Activated naive CD4-positive, alpha-beta T cell treated with anti-CD3 and anti-CD28 coated beads for 36 hours (primary cell): ENCODE measurements at regions of chr6 and their contacts with region 1.

Region 1: DNA sequence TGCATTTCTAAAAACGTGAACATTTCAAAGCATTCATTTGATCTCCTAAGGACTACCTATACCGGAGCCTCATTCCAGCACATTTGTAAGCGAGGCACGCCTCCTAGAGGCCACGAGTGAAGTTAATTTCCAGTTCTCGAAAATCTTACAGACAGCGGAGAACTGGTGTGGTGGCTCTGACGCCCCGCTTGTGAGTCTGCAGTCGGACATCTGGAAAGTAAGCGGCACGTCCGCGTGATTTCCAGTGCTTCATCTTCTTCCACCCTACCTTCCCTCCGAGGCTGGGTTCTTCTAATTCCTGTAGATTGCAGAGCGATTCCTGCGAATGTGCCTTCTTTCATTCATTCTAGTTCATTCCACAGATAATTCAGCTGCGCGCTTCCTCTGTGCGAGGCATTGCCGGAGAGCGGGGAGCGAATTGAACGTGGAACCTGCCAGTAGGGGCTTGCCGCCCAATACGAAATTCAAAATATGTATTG is 810 bp upstream of the PRIM2 start:
- DNase-seq: peak; percentile 91
- H3K4me3 Mint-ChIP-seq: peak overlapping the region; percentile 99
- H3K27ac Mint-ChIP-seq: peak overlapping the region; percentile 99
- H3K4me1 Mint-ChIP-seq: peaks cover 30% of the 10 kb centered on the region
- H3K27me3 Mint-ChIP-seq: no peaks in the 10 kb centered on the region

Region 2: GRCh38 chr6:56359201-56359899 is 957.3 kb before region 1 on chr6:
- CTCF ChIA-PET with region 1: no interaction called
- intact Hi-C with region 1: loop called (anchors 1 kb)
- DNase-seq: peak; percentile 82
- H3K4me3 Mint-ChIP-seq: no peak overlapping the region
- H3K27ac Mint-ChIP-seq: no peak overlapping the region
- H3K4me1 Mint-ChIP-seq: no peaks in the 10 kb centered on the region
- H3K27me3 Mint-ChIP-seq: no peaks in the 10 kb centered on the region

Region 3: DNA sequence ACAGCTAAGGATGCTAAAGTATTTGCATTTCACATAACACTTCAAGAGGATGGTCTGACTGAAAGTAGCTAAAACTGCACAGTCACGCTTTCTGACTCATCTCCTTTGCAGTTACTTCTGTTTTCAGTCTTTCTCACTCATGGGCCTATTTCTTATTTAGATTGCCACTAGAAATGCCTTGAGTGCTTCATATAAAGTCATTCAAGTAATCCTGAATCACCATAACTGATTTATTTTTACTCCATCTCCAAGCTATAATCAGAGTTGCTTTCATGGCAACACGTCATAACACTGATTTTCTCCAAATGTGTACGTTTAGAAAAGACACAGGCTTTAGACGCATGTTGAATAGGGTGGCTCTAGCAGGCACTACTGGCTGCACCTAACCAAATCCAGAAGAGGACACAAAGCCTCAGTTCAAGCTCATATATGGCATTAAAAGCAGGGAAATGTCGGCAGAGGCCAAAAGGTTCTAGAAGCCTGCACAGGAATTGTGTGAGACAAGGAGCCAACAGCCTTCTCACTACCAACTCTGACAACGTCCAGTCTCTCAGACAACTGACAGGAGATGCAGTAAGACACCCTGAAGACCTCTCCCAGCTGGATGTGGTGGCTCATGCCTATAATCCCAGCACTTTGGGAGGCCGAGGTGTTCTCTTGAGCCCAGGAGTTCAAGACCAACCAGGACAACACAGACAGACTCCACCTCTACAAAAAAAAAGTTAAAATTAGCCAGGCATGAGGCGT is 425.8 kb before region 1 on chr6:
- CTCF ChIA-PET with region 1: interaction called, 3 read pairs
- intact Hi-C with region 1: loop called (anchors 1 kb)
- DNase-seq: peak; percentile 60
- H3K4me3 Mint-ChIP-seq: no peak overlapping the region
- H3K27ac Mint-ChIP-seq: no peak overlapping the region
- H3K4me1 Mint-ChIP-seq: peaks cover 29% of the 10 kb centered on the region
- H3K27me3 Mint-ChIP-seq: no peaks in the 10 kb centered on the region

Region 4: DNA sequence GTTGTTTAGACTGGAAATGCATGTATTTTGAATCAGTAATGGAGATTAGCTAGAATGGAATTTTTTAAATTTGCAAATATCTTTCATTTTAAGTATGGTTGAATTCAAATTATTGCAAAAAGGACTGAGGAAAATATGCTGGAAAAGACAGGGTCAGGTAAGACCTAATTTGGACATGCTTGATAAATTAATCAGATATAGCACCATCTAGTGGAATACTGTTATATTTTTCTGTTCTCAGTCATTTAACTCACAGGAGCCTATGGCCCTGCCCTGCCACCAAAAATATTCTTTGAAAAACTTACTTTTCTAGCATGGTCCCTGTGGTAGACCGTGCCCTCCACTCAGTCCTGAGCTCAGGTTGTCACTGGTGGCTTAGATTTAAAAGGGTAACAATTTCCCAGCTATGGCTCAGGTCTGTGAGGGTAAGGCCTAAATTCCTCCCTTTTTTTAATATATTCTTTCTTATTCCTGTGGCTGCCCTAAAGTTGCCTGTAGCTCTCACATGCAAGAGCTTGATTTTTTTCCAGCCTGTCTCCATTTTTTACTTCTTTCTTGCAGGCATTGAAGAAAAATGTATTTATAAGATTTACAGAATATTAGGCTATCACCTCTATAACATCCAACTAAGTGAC is 295.4 kb before region 1 on chr6:
- CTCF ChIA-PET with region 1: interaction called, 7 read pairs
- intact Hi-C with region 1: loop called (anchors 1 kb)
- DNase-seq: peak; percentile 8
- H3K4me3 Mint-ChIP-seq: no peak overlapping the region
- H3K27ac Mint-ChIP-seq: no peak overlapping the region
- H3K4me1 Mint-ChIP-seq: no peaks in the 10 kb centered on the region
- H3K27me3 Mint-ChIP-seq: peaks cover 6% of the 10 kb centered on the region

Region 5: GRCh38 chr6:57172136-57173055 is 144.2 kb before region 1 on chr6 and contains the start of gene BAG2:
- CTCF ChIA-PET with region 1: interaction called, 3 read pairs
- intact Hi-C with region 1: loop called (anchors 1 kb)
- DNase-seq: peak; percentile 88
- H3K4me3 Mint-ChIP-seq: peak within 1 kb of the TSS; percentile 92
- H3K27ac Mint-ChIP-seq: peak within 1 kb of the TSS; percentile 85
- H3K4me1 Mint-ChIP-seq: peaks cover 31% of the 10 kb centered on the region
- H3K27me3 Mint-ChIP-seq: no peaks in the 10 kb centered on the region
- total RNA-seq, gene BAG2: 6.8 to 7.0 TPM

Region 6: GRCh38 chr6:57267586-57268293 is 48.9 kb before region 1 on chr6:
- CTCF ChIA-PET with region 1: interaction called, 25 read pairs
- intact Hi-C with region 1: loop called (anchors 1 kb)
- DNase-seq: peak; percentile 68
- H3K4me3 Mint-ChIP-seq: no peak overlapping the region
- H3K27ac Mint-ChIP-seq: no peak overlapping the region
- H3K4me1 Mint-ChIP-seq: peaks cover 20% of the 10 kb centered on the region
- H3K27me3 Mint-ChIP-seq: peaks cover 10% of the 10 kb centered on the region

Region 7: GRCh38 chr6:57432919-57433684 is 116.5 kb after region 1 on chr6:
- CTCF ChIA-PET with region 1: no interaction called
- intact Hi-C with region 1: no loop called
- DNase-seq: no peak
- H3K4me3 Mint-ChIP-seq: no peak overlapping the region
- H3K27ac Mint-ChIP-seq: no peak overlapping the region
- H3K4me1 Mint-ChIP-seq: peaks cover 18% of the 10 kb centered on the region
- H3K27me3 Mint-ChIP-seq: no peaks in the 10 kb centered on the region